Naive thymus-derived CD4-positive, alpha-beta T cell (primary cell): ENCODE measurements at regions of chr1 and their contacts with region 1.

Region 1: GRCh38 chr1:156751758-156752757 is 583 bp upstream of the HDGF start:
- DNase-seq: peak; percentile 83 to 98 (median 92)
- ATAC-seq: peak; percentile 96
- H3K4me3 ChIP-seq: peak overlapping the region; percentile 93
- H3K4me3 Mint-ChIP-seq: peak overlapping the region; percentile 88 to 98 (median 92)
- H3K27ac ChIP-seq: peak overlapping the region; percentile 90
- H3K27ac Mint-ChIP-seq: peak overlapping the region; percentile 82 to 96 (median 90)
- H3K4me1 ChIP-seq: peaks cover 36 to 38% of the 10 kb centered on the region in 2 donors
- H3K4me1 Mint-ChIP-seq: peaks cover 38 to 57% (median 45%) of the 10 kb centered on the region in 7 donors
- H3K27me3 ChIP-seq: no peaks in the 10 kb centered on the region
- H3K27me3 Mint-ChIP-seq: no peaks in the 10 kb centered on the region

Region 2: DNA sequence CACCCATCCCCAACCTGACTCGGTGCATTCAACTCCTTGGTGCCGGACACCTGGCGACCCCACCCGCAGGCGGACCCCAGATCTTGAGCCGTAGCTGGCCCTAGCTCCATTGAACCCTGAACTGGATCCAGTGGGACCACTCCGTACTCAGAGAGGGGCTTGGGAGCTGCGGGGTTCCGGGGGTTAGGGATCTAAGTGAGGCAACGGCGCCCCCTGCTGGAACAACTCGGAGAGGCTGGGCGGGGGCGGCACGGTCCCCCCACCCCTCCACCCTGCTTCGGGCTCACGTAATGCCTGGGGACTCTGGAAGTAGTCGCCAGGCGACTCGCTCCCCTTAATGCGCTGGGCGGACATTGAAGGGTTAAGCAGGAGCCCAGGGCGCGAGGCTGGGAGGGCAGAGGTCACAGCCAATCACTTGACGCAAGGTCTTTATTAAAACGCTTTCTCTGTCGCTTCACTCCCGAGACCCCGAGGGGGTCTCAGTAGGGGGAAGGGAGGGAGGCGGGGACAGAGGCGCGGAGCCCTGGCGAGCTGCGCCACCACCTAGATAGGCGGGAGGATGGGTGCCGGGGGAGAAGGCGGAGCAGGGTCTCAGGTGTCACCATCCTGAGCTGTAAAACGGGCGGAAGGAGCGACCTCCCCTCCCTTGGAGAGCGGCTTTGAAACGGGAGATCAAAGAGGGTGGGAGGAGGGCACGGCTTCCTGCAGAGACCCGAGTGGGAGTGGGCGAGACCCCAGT is 46.0 kb before region 1 on chr1:
- CTCF ChIA-PET with region 1: no interaction called
- POLR2A ChIA-PET with region 1: no interaction called
- intact Hi-C with region 1: loop called in 1 of 2 experiments (anchors 1 kb)
- DNase-seq: peak; percentile 59 to 79 (median 68)
- ATAC-seq: peak; percentile 82
- H3K4me3 ChIP-seq: peak overlapping the region; percentile 81
- H3K4me3 Mint-ChIP-seq: peak overlapping the region; percentile 88 to 95 (median 92)
- H3K27ac ChIP-seq: peak overlapping the region; percentile 71
- H3K27ac Mint-ChIP-seq: peak overlapping the region; percentile 46 to 94 (median 92)
- H3K4me1 ChIP-seq: peaks cover 23 to 27% of the 10 kb centered on the region in 2 donors
- H3K4me1 Mint-ChIP-seq: peaks cover 11 to 37% (median 21%) of the 10 kb centered on the region in 7 donors
- H3K27me3 ChIP-seq: peaks cover 3 to 4% of the 10 kb centered on the region in 2 donors
- H3K27me3 Mint-ChIP-seq: peaks cover 8 to 44% (median 24%) of the 10 kb centered on the region in 5 donors

Region 3: GRCh38 chr1:156740679-156741612 is 11.1 kb before region 1 on chr1 and contains the start of gene MRPL24:
- CTCF ChIA-PET with region 1: interaction called, 4 read pairs
- POLR2A ChIA-PET with region 1: interaction called, 64 read pairs
- intact Hi-C with region 1: loop called (anchors 1 kb)
- DNase-seq: peak; percentile 84 to 99 (median 98)
- ATAC-seq: peak; percentile 95
- H3K4me3 ChIP-seq: peak within 1 kb of the TSS; percentile 79
- H3K4me3 Mint-ChIP-seq: peak within 1 kb of the TSS; percentile 94 to 99 (median 98)
- H3K27ac ChIP-seq: peak within 1 kb of the TSS; percentile 90
- H3K27ac Mint-ChIP-seq: peak within 1 kb of the TSS; percentile 86 to 99 (median 98)
- H3K4me1 ChIP-seq: peaks cover 17 to 20% of the 10 kb centered on the region in 2 donors
- H3K4me1 Mint-ChIP-seq: peaks cover 23 to 50% (median 40%) of the 10 kb centered on the region in 7 donors
- H3K27me3 ChIP-seq: no peaks in the 10 kb centered on the region
- H3K27me3 Mint-ChIP-seq: no peaks in the 10 kb centered on the region
- total RNA-seq, gene MRPL24: 19.1 to 68.9 (median 47.2) TPM